ENCODE measurements at regions of chr10 and their contacts with region 1.

Region 1: GRCh38 chr10:29131952-29132820 is 156.7 kb upstream of the LYZL1 start:
- DNase-seq: no peak
- H3K4me3 ChIP-seq: no peak overlapping the region
- H3K27ac ChIP-seq: no peak overlapping the region
- H3K4me1 ChIP-seq: peaks cover 0 to 5% (median 0%) of the 10 kb centered on the region in 4 experiments; a peak in 2 of 7 replicates
- H3K27me3 ChIP-seq: no peaks in the 10 kb centered on the region
- CTCF ChIP-seq: no peak
- EP300 ChIP-seq: no peak
- POLR2A ChIP-seq: no peak
- RAD21 ChIP-seq: no peak

Region 2: DNA sequence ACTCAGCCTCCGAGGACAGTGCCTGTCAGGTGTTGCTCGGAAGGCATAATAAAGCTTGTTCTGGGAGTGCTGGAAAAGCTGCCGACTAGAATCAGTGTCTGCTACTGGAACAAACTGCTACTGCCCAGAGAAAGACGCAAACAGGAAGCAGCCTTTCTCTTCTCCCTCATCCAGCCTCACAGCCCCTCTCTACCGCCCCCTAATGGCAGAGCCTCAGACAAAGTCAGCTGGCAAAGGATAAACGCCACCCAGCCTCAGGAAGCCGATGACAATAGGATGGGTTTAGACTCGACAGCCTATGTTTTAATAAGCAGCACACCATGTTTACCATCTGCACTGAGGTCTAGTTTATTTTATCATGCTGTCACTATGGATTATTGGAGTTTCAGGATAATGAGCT is 12.8 kb before region 1 on chr10:
- CTCF ChIA-PET with region 1: interaction called, 52 read pairs
- POLR2A ChIA-PET with region 1: interaction called, 3 read pairs
- DNase-seq: peak; percentile 64 to 96
- H3K4me3 ChIP-seq: no peak overlapping the region
- H3K27ac ChIP-seq: no peak overlapping the region
- H3K4me1 ChIP-seq: 0 out of 7 replicates have a peak, but pooled peaks cover 0 to 2% (median 0%) of the 10 kb centered on the region in 4 experiments
- H3K27me3 ChIP-seq: no peaks in the 10 kb centered on the region
- CTCF ChIP-seq: peak; percentile 81 to 95 (median 81)
- EP300 ChIP-seq: no peak
- POLR2A ChIP-seq: no peak
- RAD21 ChIP-seq: peak; percentile 69 to 78

Region 3: GRCh38 chr10:29150003-29150402 is 17.8 kb after region 1 on chr10:
- CTCF ChIA-PET with region 1: interaction called, 19 read pairs
- POLR2A ChIA-PET with region 1: no interaction called
- DNase-seq: no peak
- H3K4me3 ChIP-seq: no peak overlapping the region
- H3K27ac ChIP-seq: no peak overlapping the region
- H3K4me1 ChIP-seq: peaks cover 0 to 5% (median 2%) of the 10 kb centered on the region in 4 experiments; a peak in 3 of 7 replicates
- H3K27me3 ChIP-seq: no peaks in the 10 kb centered on the region
- CTCF ChIP-seq: no peak
- EP300 ChIP-seq: no peak
- POLR2A ChIP-seq: no peak
- RAD21 ChIP-seq: no peak

Region 4: GRCh38 chr10:29160110-29160669 is 28.0 kb after region 1 on chr10:
- CTCF ChIA-PET with region 1: interaction called, 14 read pairs
- POLR2A ChIA-PET with region 1: no interaction called
- DNase-seq: no peak
- H3K4me3 ChIP-seq: no peak overlapping the region
- H3K27ac ChIP-seq: peak overlapping the region; percentile 69
- H3K4me1 ChIP-seq: peaks cover 4 to 15% (median 11%) of the 10 kb centered on the region in 4 experiments; a peak in 5 of 7 replicates
- H3K27me3 ChIP-seq: peaks cover 0 to 1% (median 0%) of the 10 kb centered on the region in 4 experiments; a peak in 1 of 7 replicates
- CTCF ChIP-seq: no peak
- EP300 ChIP-seq: no peak
- POLR2A ChIP-seq: no peak
- RAD21 ChIP-seq: no peak

Region 5: GRCh38 chr10:29304264-29305030 is 172.3 kb after region 1 on chr10:
- CTCF ChIA-PET with region 1: interaction called, 14 read pairs
- POLR2A ChIA-PET with region 1: no interaction called
- DNase-seq: peak; percentile 15 to 68
- H3K4me3 ChIP-seq: no peak overlapping the region
- H3K27ac ChIP-seq: no peak overlapping the region
- H3K4me1 ChIP-seq: peaks cover 0 to 5% (median 1%) of the 10 kb centered on the region in 4 experiments; a peak in 3 of 7 replicates
- H3K27me3 ChIP-seq: no peaks in the 10 kb centered on the region
- CTCF ChIP-seq: peak; percentile 57 to 84 (median 79)
- EP300 ChIP-seq: no peak
- POLR2A ChIP-seq: no peak
- RAD21 ChIP-seq: peak; percentile 94